ENCODE measurements at regions of chr3 and their contacts with region 1.

Region 1: GRCh38 chr3:98022978-98023820 is 11.9 kb downstream of the GABRR3 start:
- DNase-seq: peak; percentile 56
- ATAC-seq: peak; percentile 95
- H3K4me3 ChIP-seq: no peak overlapping the region
- H3K27ac ChIP-seq: no peak overlapping the region
- H3K4me1 ChIP-seq: peaks cover 17% of the 10 kb centered on the region; the same call in 1 of the 2 replicates
- H3K27me3 ChIP-seq: no peaks in the 10 kb centered on the region; a peak in 2 of 5 replicates
- CTCF ChIP-seq: peak; percentile 90
- EP300 ChIP-seq: no peak
- POLR2A ChIP-seq: no peak
- RAD21 ChIP-seq: peak; percentile 90

Region 2: DNA sequence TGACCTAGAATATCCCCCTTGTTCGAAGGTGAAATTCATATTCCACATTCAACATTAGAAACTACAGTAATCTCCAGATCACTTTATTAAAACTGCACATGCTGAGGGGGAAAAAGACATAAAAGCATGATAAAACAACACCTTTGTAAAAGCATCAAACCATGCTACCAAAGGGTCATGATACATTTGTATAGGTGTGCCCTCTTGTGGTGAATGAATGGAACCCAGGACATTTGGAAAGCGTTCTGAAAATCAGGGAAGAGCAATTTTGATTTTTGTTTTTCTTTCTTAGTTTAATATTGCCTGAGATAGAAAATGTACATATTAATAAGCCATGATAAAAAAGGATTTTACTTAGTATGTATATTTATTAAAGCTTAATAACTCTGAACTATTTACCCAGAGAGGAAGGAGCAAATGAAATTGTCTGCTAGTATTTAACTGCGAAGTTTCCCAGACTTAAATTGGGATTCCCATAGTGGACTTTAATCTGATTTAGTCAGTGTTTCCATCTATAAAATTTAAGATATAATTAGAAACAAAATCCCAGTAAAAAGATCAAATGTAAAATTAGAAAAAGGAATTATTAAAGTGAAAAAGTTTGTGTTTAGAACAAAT is 364.4 kb before region 1 on chr3:
- CTCF ChIA-PET with region 1: no interaction called
- POLR2A ChIA-PET with region 1: no interaction called
- in situ Hi-C with region 1: no loop called
- intact Hi-C with region 1: loop called (anchors 2 kb)
- DNase-seq: peak; percentile 21
- ATAC-seq: peak; percentile 56; the same call in 1 of the 3 replicates
- H3K4me3 ChIP-seq: no peak overlapping the region
- H3K27ac ChIP-seq: no peak overlapping the region
- H3K4me1 ChIP-seq: no peaks in the 10 kb centered on the region
- H3K27me3 ChIP-seq: no peaks in the 10 kb centered on the region
- CTCF ChIP-seq: peak; percentile 69
- EP300 ChIP-seq: no peak
- POLR2A ChIP-seq: no peak
- RAD21 ChIP-seq: no peak

Region 3: GRCh38 chr3:97793420-97794019 is 229.7 kb before region 1 on chr3:
- CTCF ChIA-PET with region 1: interaction called, 64 read pairs
- POLR2A ChIA-PET with region 1: no interaction called
- in situ Hi-C with region 1: loop called (anchors 5 kb)
- intact Hi-C with region 1: loop called (anchors 1 kb)
- DNase-seq: peak; percentile 60
- ATAC-seq: peak; percentile 48; the same call in 2 of the 3 replicates
- H3K4me3 ChIP-seq: no peak overlapping the region
- H3K27ac ChIP-seq: no peak overlapping the region
- H3K4me1 ChIP-seq: no peaks in the 10 kb centered on the region
- H3K27me3 ChIP-seq: no peaks in the 10 kb centered on the region
- CTCF ChIP-seq: peak; percentile 81
- EP300 ChIP-seq: no peak
- POLR2A ChIP-seq: no peak
- RAD21 ChIP-seq: peak; percentile 73; the same call in 1 of the 2 replicates

Region 4: GRCh38 chr3:97940034-97940433 is 83.2 kb before region 1 on chr3:
- CTCF ChIA-PET with region 1: no interaction called
- POLR2A ChIA-PET with region 1: no interaction called
- in situ Hi-C with region 1: no loop called
- intact Hi-C with region 1: loop called (anchors 2 kb)
- DNase-seq: peak; percentile 26
- ATAC-seq: peak; percentile 72
- H3K4me3 ChIP-seq: no peak overlapping the region
- H3K27ac ChIP-seq: no peak overlapping the region
- H3K4me1 ChIP-seq: no peaks in the 10 kb centered on the region
- H3K27me3 ChIP-seq: no peaks in the 10 kb centered on the region
- CTCF ChIP-seq: peak; percentile 54
- EP300 ChIP-seq: no peak
- POLR2A ChIP-seq: no peak
- RAD21 ChIP-seq: no peak

Region 5: DNA sequence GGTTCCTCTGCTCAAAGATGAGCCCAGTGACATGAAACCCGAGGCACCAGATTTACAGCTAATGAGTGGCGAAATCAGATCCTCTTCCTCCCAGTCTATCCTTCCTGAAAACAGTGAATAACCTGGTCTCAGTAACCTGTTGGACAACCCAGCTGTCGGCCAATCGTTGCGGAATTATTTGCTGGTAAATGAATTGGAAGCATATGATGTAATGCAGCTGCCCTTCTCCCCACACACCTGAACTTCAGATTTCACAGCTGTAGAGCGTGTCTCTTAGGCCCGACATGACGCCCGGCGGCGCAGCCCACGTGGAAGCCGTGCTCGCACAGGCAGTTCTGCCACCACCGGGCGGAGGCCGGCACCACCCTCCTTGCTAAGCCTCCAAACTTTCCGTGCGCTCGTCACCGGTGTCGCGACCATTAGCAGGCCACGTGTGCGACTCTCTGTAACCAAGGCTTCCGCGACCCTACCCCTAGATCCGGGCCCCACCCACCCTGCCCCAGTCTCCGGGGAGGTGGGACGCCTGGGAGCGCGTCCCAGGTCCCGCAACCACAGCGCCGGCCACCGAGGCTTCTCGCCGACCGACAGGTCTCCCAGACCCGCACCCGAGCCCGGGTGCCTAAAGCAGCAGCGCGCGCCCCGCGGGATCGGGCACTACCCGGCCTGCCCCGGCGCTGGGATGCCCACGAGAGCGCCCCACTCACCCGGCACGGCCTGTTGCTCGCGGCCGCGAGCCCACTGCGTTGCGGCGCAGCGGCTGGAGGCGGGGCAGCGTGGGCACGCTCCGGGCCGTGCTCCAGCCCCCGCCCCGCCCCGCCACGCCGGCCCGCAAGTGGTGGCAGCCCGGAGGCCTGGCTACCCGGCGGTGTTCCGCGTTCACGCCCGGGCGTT is 51.3 kb before region 1 on chr3 and contains the start of gene RIOX2:
- CTCF ChIA-PET with region 1: interaction called, 3 read pairs
- POLR2A ChIA-PET with region 1: no interaction called
- in situ Hi-C with region 1: no loop called
- intact Hi-C with region 1: loop called (anchors 1 kb)
- DNase-seq: peak; percentile 52
- ATAC-seq: peak; percentile 97
- H3K4me3 ChIP-seq: peak within 1 kb of the TSS; percentile 64 to 85 (median 67)
- H3K27ac ChIP-seq: peak within 1 kb of the TSS; percentile 68
- H3K4me1 ChIP-seq: peaks cover 44% of the 10 kb centered on the region
- H3K27me3 ChIP-seq: no peaks in the 10 kb centered on the region; a peak in 1 of 5 replicates
- CTCF ChIP-seq: peak; percentile 39
- EP300 ChIP-seq: no peak
- POLR2A ChIP-seq: peak; percentile 61 to 81; a peak in 3 of 4 replicates
- RAD21 ChIP-seq: peak; percentile 13; the same call in 1 of the 2 replicates
- total RNA-seq, gene RIOX2: 43.3 and 52.5 TPM in 2 replicates

Region 6: GRCh38 chr3:98209244-98209643 is 186.0 kb after region 1 on chr3:
- CTCF ChIA-PET with region 1: no interaction called
- POLR2A ChIA-PET with region 1: no interaction called
- in situ Hi-C with region 1: no loop called
- intact Hi-C with region 1: no loop called
- DNase-seq: no peak
- ATAC-seq: no peak
- H3K4me3 ChIP-seq: no peak overlapping the region
- H3K27ac ChIP-seq: no peak overlapping the region
- H3K4me1 ChIP-seq: no peaks in the 10 kb centered on the region
- H3K27me3 ChIP-seq: no peaks in the 10 kb centered on the region
- CTCF ChIP-seq: no peak
- EP300 ChIP-seq: no peak
- POLR2A ChIP-seq: no peak
- RAD21 ChIP-seq: no peak

Region 7: DNA sequence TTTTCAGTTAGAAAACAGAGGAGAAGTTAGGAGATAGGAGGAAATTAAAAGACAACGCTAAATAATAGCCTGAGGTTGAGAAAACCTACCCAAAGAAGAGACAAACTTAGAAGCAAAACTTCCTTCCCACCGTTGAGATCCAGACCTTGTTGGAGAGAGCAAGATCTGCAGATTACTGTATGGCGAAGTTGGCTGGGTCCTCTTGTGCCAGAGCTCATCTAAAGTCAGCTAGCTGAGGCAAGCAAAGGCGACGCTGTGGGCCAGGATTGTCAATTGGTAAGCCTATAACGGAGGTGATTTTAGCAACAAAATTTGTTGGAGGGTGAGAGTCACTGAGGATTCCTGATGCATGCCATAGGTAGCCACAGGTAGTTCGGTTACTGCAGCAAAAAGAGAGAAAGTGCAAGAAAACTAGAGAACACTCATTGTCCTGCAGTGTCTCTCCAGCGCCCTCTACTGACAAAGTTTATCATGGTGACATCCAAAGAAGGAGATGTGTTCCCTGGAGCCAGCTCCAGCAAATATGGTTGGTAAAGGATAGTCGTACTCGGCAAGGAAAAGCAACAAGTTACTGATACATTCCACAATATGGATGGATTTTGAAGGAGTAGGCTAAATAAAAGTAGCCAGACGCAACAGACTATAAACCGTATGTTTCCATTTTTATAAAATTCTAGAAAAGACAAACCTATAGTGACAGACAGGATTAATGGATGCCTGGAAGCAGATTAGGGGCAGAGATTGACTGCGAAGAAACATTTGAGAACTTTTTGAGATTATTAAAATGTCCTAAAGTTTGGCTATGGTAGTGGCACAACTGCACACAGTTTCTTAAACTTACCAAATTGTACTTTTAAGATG is 320.7 kb after region 1 on chr3:
- CTCF ChIA-PET with region 1: no interaction called
- POLR2A ChIA-PET with region 1: no interaction called
- in situ Hi-C with region 1: no loop called
- intact Hi-C with region 1: no loop called
- DNase-seq: peak; percentile 62
- ATAC-seq: peak; percentile 90
- H3K4me3 ChIP-seq: no peak overlapping the region
- H3K27ac ChIP-seq: no peak overlapping the region
- H3K4me1 ChIP-seq: no peaks in the 10 kb centered on the region
- H3K27me3 ChIP-seq: no peaks in the 10 kb centered on the region
- CTCF ChIP-seq: peak; percentile 79
- EP300 ChIP-seq: no peak
- POLR2A ChIP-seq: no peak
- RAD21 ChIP-seq: no peak

Measured in HepG2 (cell line).